ENCODE measurements at regions of chr7 and their contacts with region 1.

Region 1: DNA sequence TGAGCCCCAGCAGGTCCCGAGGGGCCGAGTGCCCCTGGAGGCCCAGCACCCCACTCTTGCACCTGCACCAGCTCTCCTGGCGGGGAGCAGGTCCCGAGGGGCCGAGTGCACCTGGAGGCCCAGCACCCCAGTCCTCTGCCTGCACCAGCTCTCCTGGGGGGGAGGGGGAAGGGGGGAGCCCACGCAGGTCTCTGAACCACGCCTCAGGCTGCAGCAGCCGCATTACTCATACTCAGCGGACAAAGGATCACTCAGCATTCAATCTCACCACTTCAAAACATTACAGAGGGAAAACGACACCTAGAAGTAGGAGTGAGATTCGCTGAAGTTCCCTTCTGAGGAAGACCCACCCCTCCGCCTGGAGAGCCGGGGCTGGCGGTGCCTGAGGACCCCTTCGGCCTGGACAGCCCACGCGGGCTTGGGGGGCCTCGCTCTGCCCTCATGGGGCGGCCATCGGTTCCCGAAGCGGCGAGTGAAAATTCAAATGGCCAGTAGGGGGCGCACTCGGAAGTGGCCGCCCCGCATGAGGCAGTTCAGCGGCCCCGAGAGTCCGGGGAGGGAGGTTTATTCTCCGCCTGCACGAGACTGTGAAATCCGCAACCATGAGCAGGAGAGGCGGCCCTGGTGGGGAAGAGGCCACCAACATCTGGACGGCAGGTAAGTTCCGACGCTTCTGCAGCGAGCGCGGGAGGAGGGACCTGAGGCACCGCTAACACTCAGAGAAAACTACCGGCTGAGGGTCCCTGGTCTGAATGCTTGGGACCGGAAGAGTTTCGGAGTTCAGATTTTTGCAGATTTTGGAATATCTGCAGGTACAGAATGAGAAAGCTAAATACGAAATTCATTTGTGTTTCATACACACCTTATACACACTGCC is 1.1 kb upstream of the GPER1 start:
- DNase-seq: peak; percentile 70 to 86
- ATAC-seq: peak; percentile 78 to 89 (median 80)
- H3K4me3 ChIP-seq: peak overlapping the region; percentile 55
- H3K27ac ChIP-seq: no peak overlapping the region
- H3K4me1 ChIP-seq: peaks cover 12% of the 10 kb centered on the region
- H3K27me3 ChIP-seq: no peaks in the 10 kb centered on the region
- CTCF ChIP-seq: peak; percentile 89

Region 2: GRCh38 chr7:1123715-1124114 is 36.9 kb after region 1 on chr7:
- intact Hi-C with region 1: loop called in 1 of 2 experiments (anchors 2 kb)
- DNase-seq: peak; percentile 88 to 92
- ATAC-seq: peak; percentile 84 to 92 (median 88)
- H3K4me3 ChIP-seq: peak overlapping the region; percentile 56
- H3K27ac ChIP-seq: peak overlapping the region; percentile 82
- H3K4me1 ChIP-seq: peaks cover 12% of the 10 kb centered on the region
- H3K27me3 ChIP-seq: no peaks in the 10 kb centered on the region
- CTCF ChIP-seq: peak; percentile 56

Region 3: DNA sequence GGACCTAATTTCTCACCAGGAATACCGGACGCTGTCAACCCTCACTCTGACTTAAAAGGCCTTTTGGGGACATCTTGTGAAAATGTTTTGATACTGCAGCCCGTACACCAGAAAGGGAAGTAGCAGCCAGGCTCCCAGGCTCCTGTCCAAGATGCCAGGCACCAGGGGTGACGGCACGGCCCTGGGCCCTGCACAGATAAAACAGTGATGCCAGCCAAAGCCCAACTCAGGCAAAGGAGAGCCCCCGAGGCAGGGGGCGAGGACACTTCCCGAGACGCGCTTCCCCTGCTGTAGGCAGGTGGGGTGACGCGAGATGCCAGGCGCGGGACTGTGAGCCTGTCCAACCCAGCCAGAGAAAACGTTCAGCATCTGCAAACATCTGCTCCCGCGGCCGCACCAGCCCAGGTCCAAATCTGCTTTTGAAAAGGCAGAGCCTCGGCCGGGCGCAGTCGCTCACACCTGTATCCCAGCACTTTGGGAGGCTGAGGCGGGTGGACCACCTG is 57.5 kb after region 1 on chr7:
- intact Hi-C with region 1: loop called in 1 of 2 experiments (anchors 5 kb)
- DNase-seq: peak in 1 of 2 donors; percentile 50
- ATAC-seq: peak; percentile 35 to 68 (median 60)
- H3K4me3 ChIP-seq: no peak overlapping the region
- H3K27ac ChIP-seq: no peak overlapping the region
- H3K4me1 ChIP-seq: no peaks in the 10 kb centered on the region
- H3K27me3 ChIP-seq: no peaks in the 10 kb centered on the region
- CTCF ChIP-seq: peak; percentile 31

Region 4: GRCh38 chr7:1175967-1176851 is 89.4 kb after region 1 on chr7:
- intact Hi-C with region 1: loop called (anchors 1 to 2 kb)
- DNase-seq: peak; percentile 81 to 90
- ATAC-seq: peak; percentile 83 to 96 (median 89)
- H3K4me3 ChIP-seq: peak overlapping the region; percentile 53
- H3K27ac ChIP-seq: no peak overlapping the region
- H3K4me1 ChIP-seq: no peaks in the 10 kb centered on the region
- H3K27me3 ChIP-seq: peaks cover 0 to 17% (median 2%) of the 10 kb centered on the region in 3 donors
- CTCF ChIP-seq: peak; percentile 89

Measured in psoas muscle (tissue), 8 donors.